ENCODE measurements at regions of chr2 and their contacts with region 1.

Region 1: DNA sequence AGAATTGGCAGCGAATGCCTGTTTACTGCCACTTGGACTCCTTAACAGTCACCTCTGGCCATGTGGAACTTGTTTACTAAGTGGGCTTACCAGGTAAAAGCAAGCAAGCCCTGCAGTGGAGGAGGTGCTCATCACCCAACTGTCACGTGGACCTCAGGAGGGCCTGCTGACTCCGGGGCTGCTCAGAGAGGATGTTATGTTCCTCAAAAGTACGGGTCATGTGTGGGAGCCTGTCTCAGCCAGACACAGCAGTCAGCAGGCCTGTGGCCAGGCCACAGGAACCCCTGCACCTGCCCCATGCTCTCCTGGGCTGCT is 36.2 kb downstream of the AMER3 start:
- DNase-seq: no peak
- ATAC-seq: no peak
- H3K4me3 ChIP-seq: no peak overlapping the region
- H3K4me3 Mint-ChIP-seq: no peak overlapping the region
- H3K27ac ChIP-seq: no peak overlapping the region
- H3K27ac Mint-ChIP-seq: no peak overlapping the region
- H3K4me1 ChIP-seq: no peaks in the 10 kb centered on the region
- H3K4me1 Mint-ChIP-seq: no peaks in the 10 kb centered on the region
- H3K27me3 ChIP-seq: no peaks in the 10 kb centered on the region
- H3K27me3 Mint-ChIP-seq: peaks cover 2% of the 10 kb centered on the region
- CTCF ChIP-seq: no peak

Region 2: DNA sequence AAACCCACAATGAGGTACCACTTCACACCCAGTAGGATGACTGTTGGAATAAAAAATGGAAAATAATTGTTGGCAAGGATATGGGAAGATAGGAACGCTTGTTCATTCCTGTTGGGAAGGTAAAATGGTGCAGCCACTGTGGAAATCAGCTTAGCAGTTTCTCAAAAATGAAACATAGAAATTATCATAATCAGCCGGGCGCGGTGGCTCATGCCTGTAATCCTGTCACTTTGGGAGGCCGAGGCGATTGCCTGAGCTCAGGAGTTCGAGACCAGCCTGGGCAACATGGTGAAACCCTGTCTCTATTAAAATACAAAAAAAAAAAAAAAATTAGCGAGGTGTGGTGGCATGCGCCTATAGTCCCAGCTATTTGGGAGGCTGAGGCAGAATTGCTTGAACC is 12.8 kb before region 1 on chr2:
- CTCF ChIA-PET with region 1: no interaction called
- POLR2A ChIA-PET with region 1: no interaction called
- intact Hi-C with region 1: loop called in 1 of 2 experiments (anchors 1 kb)
- DNase-seq: no peak
- ATAC-seq: no peak
- H3K4me3 ChIP-seq: no peak overlapping the region
- H3K4me3 Mint-ChIP-seq: no peak overlapping the region
- H3K27ac ChIP-seq: no peak overlapping the region
- H3K27ac Mint-ChIP-seq: no peak overlapping the region
- H3K4me1 ChIP-seq: no peaks in the 10 kb centered on the region
- H3K4me1 Mint-ChIP-seq: no peaks in the 10 kb centered on the region
- H3K27me3 ChIP-seq: no peaks in the 10 kb centered on the region
- H3K27me3 Mint-ChIP-seq: peaks cover 13% of the 10 kb centered on the region
- CTCF ChIP-seq: no peak

Region 3: DNA sequence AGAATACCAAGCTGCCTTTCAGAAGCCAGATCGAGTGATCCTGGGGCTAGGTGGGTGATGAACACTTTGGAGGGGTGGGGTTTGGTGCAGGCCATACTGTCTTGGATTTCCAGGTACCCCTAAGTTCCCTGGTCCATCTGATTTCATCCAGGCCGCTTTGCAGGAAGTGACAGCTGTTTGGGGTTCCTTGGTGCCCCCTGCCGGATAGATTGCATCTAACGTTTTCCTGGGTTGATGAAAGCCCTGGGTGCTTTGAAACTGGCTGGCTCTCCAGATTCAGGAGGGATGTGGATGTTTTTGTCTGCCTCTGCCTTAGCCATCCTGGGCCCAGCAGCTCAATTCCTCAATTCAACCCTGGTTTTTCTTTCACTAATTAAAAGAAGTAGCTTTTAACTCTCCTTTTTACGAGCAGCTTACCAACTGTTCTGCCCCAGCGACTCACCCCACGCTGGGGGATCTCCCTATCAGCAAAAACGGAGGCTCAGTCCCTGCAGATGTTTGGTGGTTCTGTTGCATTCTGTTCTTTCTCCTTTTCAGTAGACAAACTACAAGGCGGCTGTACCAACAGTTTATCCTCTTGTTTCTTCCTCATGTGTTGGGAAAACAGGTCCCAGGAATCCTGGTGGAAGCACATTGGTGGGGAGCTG is 82.3 kb after region 1 on chr2:
- CTCF ChIA-PET with region 1: interaction called, 173 read pairs
- POLR2A ChIA-PET with region 1: interaction called, 10 read pairs
- intact Hi-C with region 1: no loop called
- DNase-seq: peak; percentile 43 to 80 (median 68)
- ATAC-seq: peak; percentile 71
- H3K4me3 ChIP-seq: no peak overlapping the region
- H3K4me3 Mint-ChIP-seq: no peak overlapping the region
- H3K27ac ChIP-seq: no peak overlapping the region
- H3K27ac Mint-ChIP-seq: no peak overlapping the region
- H3K4me1 ChIP-seq: no peaks in the 10 kb centered on the region
- H3K4me1 Mint-ChIP-seq: no peaks in the 10 kb centered on the region
- H3K27me3 ChIP-seq: no peaks in the 10 kb centered on the region
- H3K27me3 Mint-ChIP-seq: peaks cover 3% of the 10 kb centered on the region
- CTCF ChIP-seq: peak; percentile 61